Right ventricle myocardium superior (tissue), 1 donor: ENCODE measurements at regions of chr1 and their contacts with region 1.

Region 1: DNA sequence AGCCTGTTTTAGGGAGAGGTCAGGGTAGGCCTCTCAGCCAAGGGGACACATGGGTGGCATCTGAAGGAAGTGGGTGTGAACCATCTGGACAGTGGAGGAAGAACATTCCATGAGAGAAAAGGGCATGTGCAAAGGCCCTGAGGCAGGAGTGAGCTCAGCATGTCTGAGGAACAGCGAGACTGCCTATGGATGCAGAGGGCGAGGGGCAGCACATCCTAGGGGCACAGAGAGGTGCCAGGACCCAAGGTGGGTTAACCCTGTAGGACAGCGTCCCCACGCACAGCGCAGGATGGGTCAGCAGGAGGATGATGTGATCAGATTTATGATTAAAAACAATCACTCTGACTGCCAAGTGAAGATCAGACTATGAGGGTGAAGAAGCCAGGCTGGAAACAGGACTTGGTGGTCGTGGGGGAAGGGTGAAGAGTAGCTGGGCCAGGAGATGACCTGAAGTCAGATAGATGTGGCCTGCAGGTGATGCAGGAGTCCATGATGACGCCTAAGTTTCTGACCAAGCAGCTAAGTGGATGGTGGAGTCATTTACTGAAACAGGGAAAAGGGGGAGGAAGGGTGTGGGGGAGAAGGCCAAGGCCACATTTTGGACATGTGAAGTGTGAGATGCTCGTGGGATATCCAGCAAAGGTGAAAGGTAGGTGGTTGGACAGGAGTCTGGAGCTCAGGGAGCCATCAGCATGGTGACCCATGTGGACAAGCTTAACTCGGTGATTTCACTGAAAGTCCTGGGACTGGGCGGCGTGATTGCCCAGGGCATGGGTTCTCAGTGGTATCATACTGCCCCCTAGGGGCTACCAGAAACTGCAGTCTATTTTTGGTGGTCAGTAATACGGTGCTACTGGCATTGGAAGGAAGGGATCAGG is 37.8 kb downstream of the PABPC4 start:
- DNase-seq: peak; percentile 72
- ATAC-seq: peak; percentile 89

Region 2: GRCh38 chr1:39469150-39469549 is 69.7 kb before region 1 on chr1:
- intact Hi-C with region 1: loop called (anchors 5 kb)
- DNase-seq: no peak
- ATAC-seq: no peak